HEK293 (cell line): ENCODE measurements at regions of chr1 and their contacts with region 1.

Region 1: DNA sequence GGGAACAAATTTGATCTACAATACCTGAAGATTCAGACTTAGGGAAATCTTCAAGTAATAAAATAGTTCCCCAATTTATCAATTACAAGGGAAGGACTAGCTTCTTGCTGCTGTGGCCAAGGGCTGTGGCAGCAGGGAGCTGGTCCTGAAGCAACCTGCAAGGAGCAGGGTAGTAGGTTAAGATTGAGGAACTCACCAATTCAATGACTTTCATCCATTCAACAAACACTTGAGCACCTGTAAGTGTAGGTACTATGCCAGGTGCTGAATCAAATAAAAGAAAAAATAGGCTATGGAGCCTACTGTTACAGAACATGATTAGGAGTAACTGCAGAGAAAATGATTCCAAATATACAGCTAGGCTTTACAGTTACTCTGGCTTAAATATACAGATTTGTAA is 64.2 kb upstream of the RBM34 start:
- H3K4me3 ChIP-seq: no peak overlapping the region
- H3K27ac ChIP-seq: no peak overlapping the region
- H3K4me1 ChIP-seq: no peaks in the 10 kb centered on the region
- CTCF ChIP-seq: no peak

Region 2: DNA sequence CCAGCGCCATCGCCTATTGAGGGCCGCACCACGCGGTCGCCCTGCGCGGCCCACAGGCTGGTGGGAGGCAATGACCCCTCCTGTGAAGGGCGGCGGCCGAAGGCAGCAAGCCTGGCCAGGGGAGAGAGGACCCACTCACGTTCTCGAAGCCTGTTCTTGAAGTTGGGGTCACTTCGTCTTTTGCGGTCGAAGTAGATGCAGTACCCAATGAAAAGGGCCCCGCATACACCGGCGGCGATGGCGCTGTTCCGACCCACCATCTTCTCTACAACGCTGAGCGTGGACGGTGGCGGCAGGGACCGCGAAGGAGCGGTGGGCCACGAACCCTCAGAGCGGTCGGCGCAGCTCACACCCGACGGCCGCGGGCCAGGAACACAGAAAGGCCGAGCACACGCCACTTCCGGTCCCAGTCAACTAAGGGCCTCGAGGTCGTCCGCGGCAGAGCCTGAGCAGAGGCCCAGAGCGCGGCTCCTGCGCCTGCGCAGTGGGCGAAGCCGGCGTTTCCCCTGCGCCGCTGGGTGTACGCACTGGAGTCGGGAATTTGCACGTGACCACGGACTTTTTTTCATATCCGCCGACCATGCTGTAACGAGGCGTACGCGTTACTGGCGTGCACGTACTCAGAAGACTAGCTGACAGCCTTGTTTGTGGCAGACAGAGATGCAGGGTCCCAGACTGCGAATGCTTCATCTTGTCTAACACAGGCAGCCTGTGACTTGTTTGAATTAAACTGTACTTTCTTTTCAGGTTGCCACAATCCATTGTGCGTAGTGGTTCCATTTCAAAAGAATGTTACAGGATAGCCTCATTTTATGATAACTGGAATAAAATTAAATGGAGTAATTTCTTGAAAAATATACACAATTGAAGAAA is 96.6 kb before region 1 on chr1 and contains the start of gene TOMM20:
- CTCF ChIA-PET with region 1: no interaction called
- POLR2A ChIA-PET with region 1: interaction called, 14 read pairs
- H3K4me3 ChIP-seq: peak within 1 kb of the TSS; percentile 59
- H3K27ac ChIP-seq: peak within 1 kb of the TSS; percentile 91
- H3K4me1 ChIP-seq: peaks cover 2% of the 10 kb centered on the region; the same call in 1 of the 2 replicates
- CTCF ChIP-seq: peak; percentile 86